H1 (cell line): ENCODE measurements at regions of chr6 and their contacts with region 1.

Region 1: GRCh38 chr6:119978274-119978889 is 628.8 kb upstream of the MAN1A1 start:
- DNase-seq: no peak
- H3K4me3 ChIP-seq: no peak overlapping the region
- H3K27ac ChIP-seq: no peak overlapping the region
- H3K4me1 ChIP-seq: no peaks in the 10 kb centered on the region
- H3K27me3 ChIP-seq: no peaks in the 10 kb centered on the region
- CTCF ChIP-seq: peak in 2 of 3 experiments; percentile 39 to 48; a peak in 3 of 4 replicates
- EP300 ChIP-seq: no peak
- POLR2A ChIP-seq: no peak
- RAD21 ChIP-seq: peak; percentile 54 to 58

Region 2: GRCh38 chr6:119742188-119742803 is 236.1 kb before region 1 on chr6:
- CTCF ChIA-PET with region 1: interaction called, 24 read pairs
- POLR2A ChIA-PET with region 1: no interaction called
- DNase-seq: peak in 1 of 2 experiments; percentile 91
- H3K4me3 ChIP-seq: no peak overlapping the region
- H3K27ac ChIP-seq: no peak overlapping the region
- H3K4me1 ChIP-seq: no peaks in the 10 kb centered on the region
- H3K27me3 ChIP-seq: no peaks in the 10 kb centered on the region
- CTCF ChIP-seq: peak; percentile 74 to 84 (median 78)
- EP300 ChIP-seq: no peak
- POLR2A ChIP-seq: no peak
- RAD21 ChIP-seq: peak; percentile 95 to 97

Region 3: GRCh38 chr6:119957195-119957594 is 21.2 kb before region 1 on chr6:
- CTCF ChIA-PET with region 1: interaction called, 23 read pairs
- POLR2A ChIA-PET with region 1: no interaction called
- DNase-seq: peak in 1 of 2 experiments; percentile 25
- H3K4me3 ChIP-seq: no peak overlapping the region
- H3K27ac ChIP-seq: no peak overlapping the region
- H3K4me1 ChIP-seq: peaks cover 0 to 11% (median 5%) of the 10 kb centered on the region in 4 experiments; a peak in 6 of 7 replicates
- H3K27me3 ChIP-seq: no peaks in the 10 kb centered on the region
- CTCF ChIP-seq: no peak
- EP300 ChIP-seq: no peak
- POLR2A ChIP-seq: no peak
- RAD21 ChIP-seq: no peak

Region 4: DNA sequence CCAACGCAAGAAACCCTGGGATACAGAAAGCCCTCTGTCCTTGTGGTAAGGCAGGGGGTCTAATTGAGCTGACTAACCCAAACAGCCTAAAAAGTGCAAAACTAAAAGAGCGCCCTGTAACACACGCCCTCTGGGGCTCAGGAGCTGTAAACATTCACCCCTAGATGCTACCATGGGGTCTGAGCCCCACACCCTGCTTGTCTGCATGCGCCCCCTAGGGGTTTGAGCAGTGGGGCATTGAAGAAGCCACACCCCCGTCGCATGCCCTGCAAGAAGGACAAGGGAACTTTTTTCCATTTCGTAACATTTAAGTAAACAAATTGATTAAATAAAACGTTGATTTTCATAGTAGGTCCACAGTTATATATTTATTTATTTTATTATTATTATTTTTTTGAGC is 11.9 kb before region 1 on chr6:
- CTCF ChIA-PET with region 1: interaction called, 42 read pairs
- POLR2A ChIA-PET with region 1: no interaction called
- DNase-seq: peak; percentile 44 to 83
- H3K4me3 ChIP-seq: no peak overlapping the region
- H3K27ac ChIP-seq: no peak overlapping the region
- H3K4me1 ChIP-seq: no peaks in the 10 kb centered on the region
- H3K27me3 ChIP-seq: no peaks in the 10 kb centered on the region
- CTCF ChIP-seq: peak; percentile 68 to 80 (median 70)
- EP300 ChIP-seq: no peak
- POLR2A ChIP-seq: no peak
- RAD21 ChIP-seq: peak; percentile 68 to 74

Region 5: DNA sequence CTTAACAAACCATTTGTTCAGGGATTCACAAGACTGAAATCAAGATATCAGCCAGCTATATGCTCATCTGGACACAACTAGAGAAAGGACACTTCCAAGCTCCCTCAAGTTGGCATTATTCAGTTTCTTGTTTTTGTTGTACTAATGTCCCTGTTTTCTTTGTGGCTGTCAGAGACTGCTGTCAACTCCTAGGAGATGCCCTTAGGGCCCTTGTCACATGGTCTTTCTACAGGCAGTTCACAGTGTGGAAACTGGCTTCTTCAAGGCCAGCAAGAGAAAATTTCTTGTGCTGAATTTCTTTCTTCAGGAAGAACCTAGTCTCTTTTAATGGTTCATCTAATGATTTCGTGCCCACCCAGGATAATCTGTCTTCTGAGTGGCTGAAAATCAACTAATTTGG is 48.4 kb after region 1 on chr6:
- CTCF ChIA-PET with region 1: interaction called, 10 read pairs
- POLR2A ChIA-PET with region 1: no interaction called
- DNase-seq: no peak
- H3K4me3 ChIP-seq: no peak overlapping the region
- H3K27ac ChIP-seq: no peak overlapping the region
- H3K4me1 ChIP-seq: no peaks in the 10 kb centered on the region
- H3K27me3 ChIP-seq: no peaks in the 10 kb centered on the region
- CTCF ChIP-seq: no peak
- EP300 ChIP-seq: no peak
- POLR2A ChIP-seq: no peak
- RAD21 ChIP-seq: no peak

Region 6: DNA sequence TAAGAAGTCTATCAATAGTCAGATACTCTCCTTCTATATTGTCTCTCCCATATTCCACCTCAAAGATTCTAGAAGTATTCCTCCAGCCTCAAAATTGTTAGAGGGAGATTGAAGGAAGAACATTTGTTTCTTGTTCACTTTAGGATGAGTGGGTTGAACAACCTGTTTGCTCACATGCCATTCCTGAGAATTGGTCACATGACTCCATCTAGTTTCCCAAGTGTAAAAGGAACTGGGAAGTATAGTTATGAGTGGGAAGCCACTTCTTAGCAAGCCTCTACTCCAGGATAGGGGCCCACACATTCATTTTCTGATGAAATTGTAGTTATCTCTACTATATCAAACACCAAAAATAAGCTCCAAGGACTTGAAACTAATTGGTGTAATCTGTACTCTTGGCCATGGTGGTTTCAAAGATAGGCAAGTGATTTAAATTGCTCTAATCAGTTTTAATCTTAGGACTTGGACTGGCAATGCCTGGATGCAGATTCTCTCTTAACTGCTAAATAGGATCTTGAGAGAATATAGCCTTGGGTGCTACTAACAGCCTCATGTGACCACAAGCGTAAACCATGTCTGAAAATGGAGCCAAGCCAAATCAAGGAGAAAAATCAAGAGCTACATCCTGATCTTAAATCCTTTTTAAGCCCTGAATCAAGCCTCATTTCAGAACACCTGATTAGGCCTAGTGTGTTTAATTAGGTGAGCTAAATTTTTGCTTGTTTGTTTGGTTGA is 129.8 kb after region 1 on chr6:
- CTCF ChIA-PET with region 1: no interaction called
- POLR2A ChIA-PET with region 1: no interaction called
- DNase-seq: no peak
- H3K4me3 ChIP-seq: no peak overlapping the region
- H3K27ac ChIP-seq: no peak overlapping the region
- H3K4me1 ChIP-seq: no peaks in the 10 kb centered on the region
- H3K27me3 ChIP-seq: no peaks in the 10 kb centered on the region
- CTCF ChIP-seq: no peak
- EP300 ChIP-seq: no peak
- POLR2A ChIP-seq: no peak
- RAD21 ChIP-seq: no peak